T-cell (primary cell): ENCODE measurements at regions of chr14 and their contacts with region 1.

Region 1: GRCh38 chr14:34797747-34798583 is 77.2 kb downstream of the BAZ1A start:
- DNase-seq: peak in 2 of 35 experiments; percentile 1 to 2
- ATAC-seq: no peak
- H3K4me3 ChIP-seq: no peak overlapping the region
- H3K4me3 Mint-ChIP-seq: no peak overlapping the region
- H3K27ac ChIP-seq: no peak overlapping the region
- H3K27ac Mint-ChIP-seq: no peak overlapping the region
- H3K4me1 ChIP-seq: no peaks in the 10 kb centered on the region
- H3K4me1 Mint-ChIP-seq: peaks cover 0 to 3% (median 2%) of the 10 kb centered on the region in 3 donors
- H3K27me3 ChIP-seq: no peaks in the 10 kb centered on the region
- H3K27me3 Mint-ChIP-seq: no peaks in the 10 kb centered on the region

Region 2: DNA sequence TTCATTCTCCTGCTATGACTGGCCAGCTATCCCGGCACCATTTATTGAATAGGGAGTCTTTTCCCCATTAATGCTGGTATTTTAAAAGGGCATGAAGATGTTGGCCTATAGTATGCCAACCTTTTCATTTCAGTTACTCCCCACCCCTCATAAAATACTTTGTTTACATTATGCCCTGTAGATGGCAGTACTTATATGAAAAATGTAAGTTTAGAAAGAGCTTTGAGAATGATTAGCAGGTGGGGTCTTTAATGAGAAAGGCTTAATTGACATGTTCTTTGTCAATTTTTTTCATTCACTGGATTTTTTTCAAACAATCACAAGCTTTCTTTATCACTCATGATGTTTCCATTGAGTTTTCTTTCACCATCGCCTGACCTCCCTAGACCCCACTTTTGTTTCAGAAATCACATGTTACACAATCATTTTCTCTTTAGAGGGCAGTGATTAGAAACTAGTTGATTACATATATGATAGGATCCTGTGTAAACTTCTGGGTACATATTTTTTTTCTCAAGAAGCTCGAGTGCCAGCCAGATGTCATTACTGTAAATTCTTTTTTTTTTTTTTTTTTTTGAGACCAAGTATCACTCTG is 431.6 kb after region 1 on chr14:
- CTCF ChIA-PET with region 1: interaction called in 1 of 2 experiments, 13 read pairs
- POLR2A ChIA-PET with region 1: no interaction called
- DNase-seq: peak in 1 of 35 experiments; percentile 47
- ATAC-seq: peak in 2 of 4 experiments; percentile 38 to 55
- H3K4me3 ChIP-seq: no peak overlapping the region
- H3K4me3 Mint-ChIP-seq: no peak overlapping the region
- H3K27ac ChIP-seq: no peak overlapping the region
- H3K27ac Mint-ChIP-seq: no peak overlapping the region
- H3K4me1 ChIP-seq: peaks cover 4 to 10% of the 10 kb centered on the region in 2 experiments
- H3K4me1 Mint-ChIP-seq: peaks cover 19 to 31% (median 20%) of the 10 kb centered on the region in 3 donors
- H3K27me3 ChIP-seq: no peaks in the 10 kb centered on the region
- H3K27me3 Mint-ChIP-seq: no peaks in the 10 kb centered on the region